ENCODE measurements at regions of chr9 and their contacts with region 1.

Region 1: GRCh38 chr9:130042833-130043653 is at the start of gene FNBP1:
- DNase-seq: no peak
- ATAC-seq: peak; percentile 53
- H3K4me3 ChIP-seq: peak within 1 kb of the TSS; percentile 95
- H3K27ac ChIP-seq: peak within 1 kb of the TSS; percentile 83
- H3K4me1 ChIP-seq: peaks cover 24% of the 10 kb centered on the region
- H3K27me3 ChIP-seq: no peaks in the 10 kb centered on the region
- CTCF ChIP-seq: no peak
- EP300 ChIP-seq: no peak
- POLR2A ChIP-seq: peak; percentile 92
- RAD21 ChIP-seq: no peak
- polyA plus RNA-seq, gene FNBP1: 64.5 to 80.5 TPM

Region 2: GRCh38 chr9:129569502-129570449 is 473.3 kb before region 1 on chr9:
- CTCF ChIA-PET with region 1: no interaction called
- POLR2A ChIA-PET with region 1: no interaction called
- RAD21 ChIA-PET with region 1: no interaction called
- SMC1A ChIA-PET with region 1: no interaction called
- in situ Hi-C with region 1: no loop called
- intact Hi-C with region 1: no loop called
- DNase-seq: no peak
- ATAC-seq: peak; percentile 25; the same call in 1 of the 3 replicates
- H3K4me3 ChIP-seq: no peak overlapping the region
- H3K27ac ChIP-seq: no peak overlapping the region
- H3K4me1 ChIP-seq: peaks cover 4% of the 10 kb centered on the region; the same call in 1 of the 2 replicates
- H3K27me3 ChIP-seq: no peaks in the 10 kb centered on the region; a peak in 1 of 4 replicates
- CTCF ChIP-seq: peak; percentile 19 to 39 (median 33); a peak in 4 of 6 replicates
- EP300 ChIP-seq: no peak
- POLR2A ChIP-seq: no peak
- RAD21 ChIP-seq: no peak

Region 3: DNA sequence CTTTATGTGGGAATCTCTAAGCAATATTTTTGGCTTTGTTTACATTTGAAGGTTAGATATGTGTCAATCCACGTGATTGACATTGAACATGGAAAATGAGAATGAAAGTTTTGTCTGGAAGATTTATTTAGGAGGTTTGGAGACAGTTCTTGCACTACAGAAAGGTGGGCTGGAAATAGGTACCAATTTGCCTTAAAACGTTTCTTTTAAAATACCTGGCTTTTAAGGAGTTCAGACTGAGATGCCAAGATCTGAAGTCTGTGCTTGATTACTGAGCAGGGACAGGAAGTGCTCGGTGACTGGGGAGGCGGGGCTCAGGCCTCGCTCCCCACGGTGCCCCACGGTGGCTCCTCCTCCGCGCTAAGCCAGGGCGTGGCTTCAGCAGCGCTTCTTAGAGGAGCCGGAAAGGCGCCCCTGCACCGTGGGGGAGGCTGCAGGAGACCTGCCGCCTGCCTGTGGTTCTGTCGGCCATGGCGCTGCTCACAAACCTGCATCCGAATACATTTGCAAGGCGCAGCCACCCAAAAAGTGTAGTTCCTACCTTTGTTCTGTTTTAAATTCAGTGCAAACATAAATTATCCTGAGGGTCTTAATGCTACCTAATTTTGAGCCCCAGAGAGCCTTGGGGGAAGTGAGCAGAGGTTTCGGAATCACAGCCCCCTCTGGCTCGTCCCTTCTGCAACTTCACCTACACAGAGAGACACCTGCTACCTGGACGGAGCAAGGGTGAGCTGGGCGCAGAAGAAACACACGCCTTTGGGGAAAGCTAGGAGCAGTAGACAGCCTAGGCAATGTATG is 158.6 kb before region 1 on chr9:
- CTCF ChIA-PET with region 1: interaction called, 4 read pairs
- POLR2A ChIA-PET with region 1: interaction called, 11 read pairs
- RAD21 ChIA-PET with region 1: interaction called, 54 read pairs
- SMC1A ChIA-PET with region 1: interaction called, 18 read pairs
- in situ Hi-C with region 1: loop called (anchors 5 kb)
- intact Hi-C with region 1: loop called (anchors 2 kb)
- DNase-seq: peak; percentile 83
- ATAC-seq: peak; percentile 64
- H3K4me3 ChIP-seq: peak overlapping the region; percentile 74
- H3K27ac ChIP-seq: peak overlapping the region; percentile 96
- H3K4me1 ChIP-seq: peaks cover 50% of the 10 kb centered on the region
- H3K27me3 ChIP-seq: no peaks in the 10 kb centered on the region
- CTCF ChIP-seq: 0 out of 6 replicates have a peak, but pooled peaks of 1 of the 3 experiments have one; percentile 2
- EP300 ChIP-seq: no peak
- POLR2A ChIP-seq: peak; percentile 67; the same call in 1 of the 2 replicates
- RAD21 ChIP-seq: no peak

Region 4: GRCh38 chr9:129962889-129963703 is 79.9 kb before region 1 on chr9:
- CTCF ChIA-PET with region 1: no interaction called
- POLR2A ChIA-PET with region 1: interaction called, 5 read pairs
- RAD21 ChIA-PET with region 1: interaction called, 21 read pairs
- SMC1A ChIA-PET with region 1: interaction called, 9 read pairs
- in situ Hi-C with region 1: no loop called
- intact Hi-C with region 1: no loop called
- DNase-seq: peak; percentile 59
- ATAC-seq: peak; percentile 96
- H3K4me3 ChIP-seq: peak overlapping the region; percentile 64
- H3K27ac ChIP-seq: peak overlapping the region; percentile 90
- H3K4me1 ChIP-seq: peaks cover 47% of the 10 kb centered on the region
- H3K27me3 ChIP-seq: no peaks in the 10 kb centered on the region
- CTCF ChIP-seq: no peak
- EP300 ChIP-seq: no peak
- POLR2A ChIP-seq: peak; percentile 58
- RAD21 ChIP-seq: no peak

Region 5: GRCh38 chr9:130010151-130010988 is 32.7 kb before region 1 on chr9:
- CTCF ChIA-PET with region 1: interaction called, 8 read pairs
- POLR2A ChIA-PET with region 1: interaction called, 17 read pairs
- RAD21 ChIA-PET with region 1: interaction called, 26 read pairs
- SMC1A ChIA-PET with region 1: interaction called, 763 read pairs
- in situ Hi-C with region 1: no loop called
- intact Hi-C with region 1: no loop called
- DNase-seq: no peak
- ATAC-seq: peak; percentile 59
- H3K4me3 ChIP-seq: peak overlapping the region; percentile 42; the same call in 1 of the 2 replicates
- H3K27ac ChIP-seq: peak overlapping the region; percentile 99
- H3K4me1 ChIP-seq: peaks cover 77% of the 10 kb centered on the region
- H3K27me3 ChIP-seq: no peaks in the 10 kb centered on the region
- CTCF ChIP-seq: no peak
- EP300 ChIP-seq: peak; percentile 77 to 95
- POLR2A ChIP-seq: peak; percentile 61
- RAD21 ChIP-seq: no peak

Region 6: GRCh38 chr9:130023144-130023787 is 19.8 kb before region 1 on chr9:
- CTCF ChIA-PET with region 1: interaction called, 20 read pairs
- POLR2A ChIA-PET with region 1: interaction called, 220 read pairs
- RAD21 ChIA-PET with region 1: interaction called, 160 read pairs
- SMC1A ChIA-PET with region 1: interaction called, 73 read pairs
- in situ Hi-C with region 1: no loop called
- intact Hi-C with region 1: no loop called
- DNase-seq: peak; percentile 88
- ATAC-seq: peak; percentile 47
- H3K4me3 ChIP-seq: peak overlapping the region; percentile 59
- H3K27ac ChIP-seq: peak overlapping the region; percentile 83
- H3K4me1 ChIP-seq: peaks cover 92% of the 10 kb centered on the region
- H3K27me3 ChIP-seq: no peaks in the 10 kb centered on the region
- CTCF ChIP-seq: no peak
- EP300 ChIP-seq: peak; percentile 9 to 85; a peak in 2 of 4 replicates
- POLR2A ChIP-seq: peak; percentile 58
- RAD21 ChIP-seq: no peak

Region 7: DNA sequence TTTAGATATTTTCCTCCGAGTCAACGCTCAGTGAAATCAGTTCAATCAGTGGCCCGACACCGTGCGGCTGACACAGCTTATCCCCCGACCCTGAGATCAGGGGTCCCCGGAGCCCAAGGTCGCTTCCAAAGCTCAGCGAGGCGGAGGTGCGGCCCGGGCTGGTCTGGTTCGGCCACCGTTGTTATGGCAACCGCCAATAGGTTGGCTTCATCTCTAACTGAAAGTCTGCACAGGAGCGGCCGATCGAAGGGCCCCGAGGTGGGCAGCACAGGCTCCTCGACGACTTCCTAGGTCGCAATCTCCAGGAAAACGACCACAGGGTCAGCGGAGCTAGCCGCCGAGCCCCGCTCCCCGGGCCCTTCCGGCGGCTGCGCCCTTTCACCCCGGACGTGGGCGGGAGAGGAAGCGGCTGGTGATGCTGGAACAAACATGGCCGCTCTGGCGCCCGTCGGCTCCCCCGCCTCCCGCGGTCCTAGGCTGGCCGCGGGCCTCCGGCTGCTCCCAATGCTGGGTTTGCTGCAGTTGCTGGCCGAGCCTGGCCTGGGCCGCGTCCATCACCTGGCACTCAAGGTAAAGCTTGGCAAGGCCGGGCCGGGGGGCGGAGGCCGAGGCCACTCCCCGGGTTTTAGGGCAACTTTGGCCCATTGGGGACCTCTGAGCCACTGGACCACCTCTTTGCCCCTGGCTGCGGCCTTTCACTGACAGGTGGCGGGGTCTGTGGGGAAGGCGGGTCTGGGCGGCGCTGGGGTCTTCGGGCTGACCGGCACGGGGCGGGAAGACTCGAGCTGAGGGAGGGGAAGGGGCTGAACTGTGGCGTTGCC is 10.7 kb after region 1 on chr9 and contains the start of gene GPR107:
- CTCF ChIA-PET with region 1: interaction called, 5 read pairs
- POLR2A ChIA-PET with region 1: interaction called, 18 read pairs
- RAD21 ChIA-PET with region 1: interaction called, 11 read pairs
- SMC1A ChIA-PET with region 1: interaction called, 7 read pairs
- in situ Hi-C with region 1: no loop called
- intact Hi-C with region 1: no loop called
- DNase-seq: no peak
- ATAC-seq: peak; percentile 94
- H3K4me3 ChIP-seq: peak within 1 kb of the TSS; percentile 83
- H3K27ac ChIP-seq: peak within 1 kb of the TSS; percentile 95
- H3K4me1 ChIP-seq: peaks cover 7% of the 10 kb centered on the region
- H3K27me3 ChIP-seq: no peaks in the 10 kb centered on the region
- CTCF ChIP-seq: no peak
- EP300 ChIP-seq: 0 out of 4 replicates have a peak, but pooled peaks of 1 of the 2 experiments have one; percentile 7
- POLR2A ChIP-seq: peak; percentile 85
- RAD21 ChIP-seq: no peak
- polyA plus RNA-seq, gene GPR107: 2.7 to 2.9 TPM

Region 8: DNA sequence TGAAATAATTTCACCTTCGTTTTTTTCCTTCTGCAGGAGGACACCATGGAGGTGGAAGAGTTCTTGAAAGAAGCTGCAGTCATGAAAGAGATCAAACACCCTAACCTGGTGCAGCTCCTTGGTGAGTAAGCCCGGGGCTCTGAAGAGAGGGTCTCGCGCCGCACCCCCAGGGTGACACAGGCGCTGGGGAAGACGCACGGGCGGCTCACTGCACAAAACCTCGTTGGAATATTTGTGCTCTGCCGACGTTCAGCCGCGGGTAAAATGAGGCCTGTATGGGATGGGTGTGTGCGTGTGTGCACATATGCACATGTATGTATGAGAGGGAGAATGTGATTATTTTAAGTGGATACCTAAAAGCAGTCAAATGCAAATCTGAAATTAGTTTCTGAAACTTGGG is 829.0 kb after region 1 on chr9:
- CTCF ChIA-PET with region 1: no interaction called
- POLR2A ChIA-PET with region 1: interaction called, 10 read pairs
- RAD21 ChIA-PET with region 1: no interaction called
- SMC1A ChIA-PET with region 1: no interaction called
- in situ Hi-C with region 1: no loop called
- intact Hi-C with region 1: no loop called
- DNase-seq: no peak
- ATAC-seq: no peak
- H3K4me3 ChIP-seq: no peak overlapping the region
- H3K27ac ChIP-seq: no peak overlapping the region
- H3K4me1 ChIP-seq: peaks cover 25% of the 10 kb centered on the region
- H3K27me3 ChIP-seq: no peaks in the 10 kb centered on the region
- CTCF ChIP-seq: no peak
- EP300 ChIP-seq: no peak
- POLR2A ChIP-seq: no peak
- RAD21 ChIP-seq: no peak

Measured in GM12878 (cell line).